HepG2 (cell line): ENCODE measurements at regions of chr22 and their contacts with region 1.

Region 1: GRCh38 chr22:38412435-38413084 is 42.4 kb downstream of the KCNJ4 start:
- DNase-seq: no peak
- ATAC-seq: peak; percentile 70
- H3K4me3 ChIP-seq: peak overlapping the region in 2 of 3 experiments; percentile 26 to 65; a peak in 4 of 6 replicates
- H3K27ac ChIP-seq: no peak overlapping the region
- H3K4me1 ChIP-seq: peaks cover 13% of the 10 kb centered on the region
- H3K27me3 ChIP-seq: peaks cover 0 to 1% of the 10 kb centered on the region in 2 experiments; a peak in 2 of 5 replicates
- CTCF ChIP-seq: peak; percentile 58; the same call in 1 of the 2 replicates
- EP300 ChIP-seq: no peak
- POLR2A ChIP-seq: no peak
- RAD21 ChIP-seq: peak; percentile 70

Region 2: DNA sequence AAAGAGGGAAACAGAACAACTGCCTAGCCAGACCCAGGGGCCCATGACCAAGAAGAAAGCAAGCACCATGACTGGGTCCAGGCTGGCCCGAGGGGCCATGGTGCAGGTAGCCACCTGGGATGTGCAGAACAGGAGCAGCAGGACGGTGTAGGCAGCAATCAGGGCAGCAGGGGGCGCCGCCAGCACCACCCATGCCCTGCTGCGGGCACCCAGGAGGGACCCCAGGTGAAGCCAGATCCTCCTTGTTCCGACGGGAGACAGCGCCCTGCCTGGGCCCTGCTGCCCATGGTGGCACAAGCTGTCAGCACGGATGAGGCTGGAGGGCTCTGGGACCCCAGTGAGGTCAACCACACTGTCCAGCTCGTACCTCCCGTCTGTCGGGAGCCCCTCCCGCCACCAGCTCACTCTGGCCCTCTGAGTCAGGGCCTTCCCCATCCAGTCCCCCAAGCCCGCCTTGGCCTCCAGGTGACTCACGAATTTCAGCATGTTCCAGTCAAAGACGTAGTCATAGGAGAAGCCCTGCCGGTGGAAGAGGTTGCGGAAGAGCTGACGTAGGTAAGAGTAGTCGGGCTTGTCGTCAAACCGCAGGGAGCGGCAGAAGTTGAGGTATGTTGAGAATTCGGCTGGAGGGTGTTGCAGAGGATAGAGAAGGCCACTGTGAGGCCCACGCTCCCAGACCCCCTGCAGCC is 114.1 kb before region 1 on chr22:
- CTCF ChIA-PET with region 1: no interaction called
- POLR2A ChIA-PET with region 1: no interaction called
- in situ Hi-C with region 1: no loop called
- intact Hi-C with region 1: no loop called
- DNase-seq: no peak
- ATAC-seq: peak; percentile 76
- H3K4me3 ChIP-seq: no peak overlapping the region
- H3K27ac ChIP-seq: no peak overlapping the region
- H3K4me1 ChIP-seq: no peaks in the 10 kb centered on the region
- H3K27me3 ChIP-seq: no peaks in the 10 kb centered on the region
- CTCF ChIP-seq: peak; percentile 78
- EP300 ChIP-seq: no peak
- POLR2A ChIP-seq: no peak
- RAD21 ChIP-seq: peak; percentile 75

Region 3: GRCh38 chr22:38481162-38481870 is 68.8 kb after region 1 on chr22:
- CTCF ChIA-PET with region 1: no interaction called
- POLR2A ChIA-PET with region 1: no interaction called
- in situ Hi-C with region 1: no loop called
- intact Hi-C with region 1: loop called (anchors 2 kb)
- DNase-seq: no peak
- ATAC-seq: no peak; the same call in 2 of the 3 replicates
- H3K4me3 ChIP-seq: no peak overlapping the region
- H3K27ac ChIP-seq: no peak overlapping the region
- H3K4me1 ChIP-seq: peaks cover 12% of the 10 kb centered on the region
- H3K27me3 ChIP-seq: no peaks in the 10 kb centered on the region
- CTCF ChIP-seq: no peak
- EP300 ChIP-seq: no peak
- POLR2A ChIP-seq: no peak
- RAD21 ChIP-seq: no peak

Region 4: GRCh38 chr22:38569972-38570778 is 157.6 kb after region 1 on chr22 and contains the start of gene DMC1:
- CTCF ChIA-PET with region 1: interaction called, 3 read pairs
- POLR2A ChIA-PET with region 1: no interaction called
- in situ Hi-C with region 1: loop called (anchors 5 kb)
- intact Hi-C with region 1: no loop called
- DNase-seq: peak; percentile 69
- ATAC-seq: peak; percentile 87
- H3K4me3 ChIP-seq: peak within 1 kb of the TSS; percentile 54 to 78 (median 71)
- H3K27ac ChIP-seq: no peak within 1 kb of the TSS
- H3K4me1 ChIP-seq: peaks cover 13% of the 10 kb centered on the region
- H3K27me3 ChIP-seq: no peaks in the 10 kb centered on the region
- CTCF ChIP-seq: no peak; the same call in 1 of the 2 replicates
- EP300 ChIP-seq: no peak
- POLR2A ChIP-seq: peak in 1 of 2 experiments; percentile 57; a peak in 2 of 4 replicates
- RAD21 ChIP-seq: no peak
- total RNA-seq, gene DMC1: 0.28 and 0.82 TPM in 2 replicates